Right ventricle myocardium inferior (tissue), 1 donor: ENCODE measurements at regions of chr3 and their contacts with region 1.

Region 1: DNA sequence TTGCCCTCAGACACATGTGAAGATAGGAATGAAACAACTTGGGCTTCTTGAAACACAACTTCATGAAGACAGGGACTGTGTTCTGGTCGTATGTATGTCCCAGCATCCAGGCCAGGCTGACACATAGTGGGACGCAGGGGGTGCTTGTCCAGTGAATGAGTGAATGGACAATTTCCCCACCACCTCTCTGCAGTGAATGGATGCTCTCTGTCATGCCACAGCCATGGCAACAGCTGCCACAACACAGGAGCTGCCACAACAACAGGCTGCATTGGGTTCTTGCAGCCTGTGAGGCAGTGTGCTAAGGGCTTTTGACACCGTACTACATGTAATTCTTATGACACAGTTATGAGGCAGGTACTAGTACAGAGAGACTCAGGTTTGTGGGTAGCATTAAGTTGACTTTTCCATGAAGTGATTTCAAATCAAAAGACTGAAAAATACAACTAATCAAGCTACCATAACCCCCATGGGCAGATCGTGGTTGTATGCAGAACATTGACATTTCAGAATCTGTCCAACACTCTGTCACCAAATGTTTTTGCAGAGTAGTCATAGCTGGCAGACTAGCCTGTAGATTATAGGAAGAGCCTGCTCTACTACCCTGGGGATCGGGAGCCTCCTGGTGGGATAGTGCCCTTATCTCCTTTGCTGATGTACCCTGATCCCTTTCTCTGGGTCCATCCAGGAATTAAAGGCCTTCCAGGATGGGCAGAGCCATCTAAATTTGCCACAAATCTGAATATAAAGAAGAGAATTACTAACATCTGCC is 40.8 kb downstream of the CLSTN2 start:
- DNase-seq: no peak
- ATAC-seq: peak; percentile 83

Region 2: DNA sequence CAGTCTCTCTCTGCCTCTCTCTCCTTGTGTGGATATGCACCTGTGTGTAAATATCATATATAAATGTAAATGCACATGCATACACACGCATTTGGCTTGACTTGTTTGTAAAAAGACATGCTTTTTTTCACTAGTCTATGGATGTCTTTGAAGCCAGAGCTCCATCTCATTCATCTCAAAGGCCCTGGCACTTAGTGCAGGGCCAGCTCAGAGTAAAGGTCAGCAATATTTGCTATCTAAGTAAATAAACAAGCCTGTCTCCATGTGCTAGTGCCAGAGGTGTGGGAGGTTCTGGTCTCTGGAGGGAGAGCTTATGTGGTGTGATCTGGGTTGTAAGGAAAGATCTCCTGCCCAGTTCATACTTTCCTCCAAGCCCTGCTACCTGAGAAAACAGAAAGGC is 35.2 kb before region 1 on chr3:
- intact Hi-C with region 1: loop called (anchors 1 kb)
- DNase-seq: no peak
- ATAC-seq: peak; percentile 79

Region 3: GRCh38 chr3:140051019-140051957 is 75.5 kb after region 1 on chr3:
- intact Hi-C with region 1: loop called (anchors 5 kb)
- DNase-seq: no peak
- ATAC-seq: no peak

Region 4: GRCh38 chr3:140251678-140252077 is 275.9 kb after region 1 on chr3:
- intact Hi-C with region 1: no loop called
- DNase-seq: no peak
- ATAC-seq: no peak